ENCODE measurements at regions of chr13 and their contacts with region 1.

Region 1: GRCh38 chr13:75482070-75482819 is at the start of gene TBC1D4:
- DNase-seq: peak; percentile 89
- H3K4me3 ChIP-seq: peak within 1 kb of the TSS; percentile 64
- H3K27ac ChIP-seq: peak within 1 kb of the TSS; percentile 86
- H3K4me1 ChIP-seq: peaks cover 43% of the 10 kb centered on the region
- H3K27me3 ChIP-seq: no peaks in the 10 kb centered on the region
- CTCF ChIP-seq: peak; percentile 86
- total RNA-seq, gene TBC1D4: 15.7 and 19.5 TPM in 2 replicates

Region 2: GRCh38 chr13:75357576-75358289 is 124.5 kb before region 1 on chr13:
- CTCF ChIA-PET with region 1: no interaction called
- POLR2A ChIA-PET with region 1: no interaction called
- intact Hi-C with region 1: loop called (anchors 1 kb)
- DNase-seq: peak in 1 of 2 experiments; percentile 7
- H3K4me3 ChIP-seq: no peak overlapping the region
- H3K27ac ChIP-seq: no peak overlapping the region
- H3K4me1 ChIP-seq: no peaks in the 10 kb centered on the region
- H3K27me3 ChIP-seq: no peaks in the 10 kb centered on the region
- CTCF ChIP-seq: peak; percentile 64

Region 3: GRCh38 chr13:75372517-75372916 is 109.7 kb before region 1 on chr13:
- CTCF ChIA-PET with region 1: interaction called, 3 read pairs
- POLR2A ChIA-PET with region 1: no interaction called
- intact Hi-C with region 1: loop called (anchors 2 kb)
- DNase-seq: peak; percentile 16 to 44
- H3K4me3 ChIP-seq: no peak overlapping the region
- H3K27ac ChIP-seq: no peak overlapping the region
- H3K4me1 ChIP-seq: no peaks in the 10 kb centered on the region
- H3K27me3 ChIP-seq: no peaks in the 10 kb centered on the region
- CTCF ChIP-seq: peak; percentile 87

Region 4: DNA sequence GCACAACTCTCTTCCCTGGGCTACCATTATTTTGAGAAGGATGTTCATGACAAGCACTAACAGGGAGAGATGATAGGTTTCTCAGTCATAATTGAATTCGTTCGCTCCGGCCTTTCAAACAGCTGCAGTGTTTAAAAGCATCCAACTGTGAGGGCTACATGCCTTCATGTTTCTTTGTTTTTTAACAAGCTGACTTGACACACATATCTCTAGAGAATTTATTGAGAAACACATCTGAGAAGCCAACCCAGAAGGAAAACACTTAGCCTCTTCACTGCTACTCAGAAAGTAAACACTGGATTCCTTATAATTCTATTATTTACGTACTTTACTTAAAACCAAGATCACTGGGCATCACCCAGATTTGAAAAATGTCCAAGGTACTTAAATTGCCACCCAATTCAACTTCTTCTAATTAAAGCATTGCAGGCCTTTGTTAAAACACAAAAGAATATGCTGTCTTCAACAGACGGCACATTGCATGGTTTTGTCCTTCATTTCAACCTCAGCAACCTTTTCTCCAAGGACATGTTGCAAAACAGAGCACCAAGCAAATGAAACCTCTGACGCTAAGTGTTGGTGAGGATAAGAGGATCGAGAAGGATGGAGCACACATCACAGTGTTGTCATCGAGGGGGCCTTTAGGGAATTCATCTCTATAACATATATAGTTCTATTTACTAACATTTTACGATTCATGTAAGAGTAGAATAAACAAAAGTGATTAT is 76.1 kb before region 1 on chr13:
- CTCF ChIA-PET with region 1: no interaction called
- POLR2A ChIA-PET with region 1: no interaction called
- intact Hi-C with region 1: no loop called
- DNase-seq: no peak
- H3K4me3 ChIP-seq: no peak overlapping the region
- H3K27ac ChIP-seq: no peak overlapping the region
- H3K4me1 ChIP-seq: no peaks in the 10 kb centered on the region
- H3K27me3 ChIP-seq: no peaks in the 10 kb centered on the region
- CTCF ChIP-seq: no peak

Region 5: DNA sequence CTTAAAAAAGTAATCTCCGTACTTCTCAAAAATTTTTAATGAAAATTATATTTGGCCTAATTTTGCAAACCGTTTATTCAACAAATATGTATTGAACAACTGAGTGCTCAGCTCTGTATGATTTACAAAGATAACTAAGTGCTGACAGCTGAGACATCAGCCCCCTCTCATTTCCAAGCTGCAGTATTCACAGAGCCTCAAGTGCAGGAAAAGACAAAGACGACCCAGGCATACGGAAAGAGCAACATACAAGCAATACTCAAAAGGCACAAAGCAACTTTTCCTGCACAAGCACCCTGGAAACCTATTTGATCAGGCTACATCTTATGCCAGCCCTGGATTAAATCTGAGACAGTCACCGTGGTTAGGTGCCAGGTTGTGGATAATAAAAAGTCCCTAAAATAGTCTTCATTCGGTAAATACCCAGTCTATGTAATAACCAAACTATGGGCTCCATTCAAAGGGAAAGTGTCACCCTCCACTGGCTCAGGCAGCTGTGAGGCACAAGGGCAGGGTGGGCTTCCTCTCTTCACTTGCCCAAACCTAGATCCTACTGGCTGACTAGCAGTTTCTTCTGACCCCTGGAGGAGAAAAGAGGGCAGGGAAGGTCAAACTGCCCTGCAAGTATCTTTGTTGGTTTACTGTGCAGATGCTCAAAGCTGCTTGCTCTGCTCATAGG is 65.8 kb before region 1 on chr13:
- CTCF ChIA-PET with region 1: no interaction called
- POLR2A ChIA-PET with region 1: no interaction called
- intact Hi-C with region 1: loop called (anchors 2 kb)
- DNase-seq: no peak
- H3K4me3 ChIP-seq: 0 out of 2 replicates have a peak overlapping the region, but pooled peaks have one; percentile 10
- H3K27ac ChIP-seq: peak overlapping the region; percentile 65; the same call in 1 of the 2 replicates
- H3K4me1 ChIP-seq: peaks cover 50% of the 10 kb centered on the region
- H3K27me3 ChIP-seq: no peaks in the 10 kb centered on the region
- CTCF ChIP-seq: no peak

Region 6: GRCh38 chr13:75537401-75538365 is 55.4 kb after region 1 on chr13 and contains the start of gene COMMD6:
- CTCF ChIA-PET with region 1: no interaction called
- POLR2A ChIA-PET with region 1: no interaction called
- intact Hi-C with region 1: loop called (anchors 2 kb)
- DNase-seq: peak; percentile 70 to 75
- H3K4me3 ChIP-seq: peak within 1 kb of the TSS; percentile 87
- H3K27ac ChIP-seq: peak within 1 kb of the TSS; percentile 7; the same call in 1 of the 2 replicates
- H3K4me1 ChIP-seq: peaks cover 14% of the 10 kb centered on the region
- H3K27me3 ChIP-seq: no peaks in the 10 kb centered on the region
- CTCF ChIP-seq: peak; percentile 76
- total RNA-seq, gene COMMD6: 117 and 118 TPM in 2 replicates

Region 7: DNA sequence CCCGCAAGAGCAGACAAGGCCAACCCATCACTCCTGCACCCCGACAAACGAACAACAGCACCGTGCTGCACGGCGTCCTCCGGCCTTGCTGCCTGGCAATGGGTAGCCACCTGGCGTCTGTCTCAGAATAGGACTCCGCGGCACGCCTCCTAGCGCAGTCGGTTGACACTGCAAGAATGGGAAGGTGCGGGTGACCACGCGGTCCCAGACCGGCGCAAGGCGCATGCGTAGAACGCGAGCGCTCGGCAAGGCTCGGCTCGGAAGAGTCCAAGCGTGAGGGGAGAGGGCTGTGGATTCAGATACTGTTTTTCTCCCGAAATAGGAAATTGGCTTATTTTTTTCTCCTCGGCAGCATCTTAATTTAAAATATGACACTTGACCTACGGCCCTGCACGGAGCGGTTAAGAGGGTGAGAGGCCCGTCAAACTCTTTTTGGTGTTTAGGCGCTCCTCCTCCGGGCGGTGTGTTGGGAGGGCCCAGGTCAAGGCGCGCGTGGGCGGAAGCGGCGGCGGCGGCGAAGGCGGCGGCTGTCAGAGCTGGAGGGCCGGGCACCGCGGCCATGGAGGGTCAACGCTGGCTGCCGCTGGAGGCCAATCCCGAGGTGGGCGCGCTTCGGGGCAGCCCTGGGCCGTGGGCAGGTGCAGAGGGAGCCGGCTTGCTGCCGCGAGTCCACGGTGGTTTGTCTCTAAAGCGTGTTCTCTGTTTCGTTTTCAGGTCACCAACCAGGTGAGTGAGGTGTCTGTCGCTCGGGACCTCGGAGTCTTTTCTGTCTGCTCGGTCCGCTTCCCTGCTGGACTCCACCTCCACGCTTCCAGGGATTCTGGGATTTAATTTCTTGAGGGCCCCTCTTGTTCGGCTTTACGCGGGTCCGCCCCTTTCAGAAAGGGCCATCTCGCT is 67.3 kb after region 1 on chr13 and contains the start of gene UCHL3:
- CTCF ChIA-PET with region 1: interaction called, 13 read pairs
- POLR2A ChIA-PET with region 1: no interaction called
- intact Hi-C with region 1: loop called (anchors 1 kb)
- DNase-seq: peak; percentile 88 to 96
- H3K4me3 ChIP-seq: peak within 1 kb of the TSS; percentile 87
- H3K27ac ChIP-seq: peak within 1 kb of the TSS; percentile 66
- H3K4me1 ChIP-seq: peaks cover 44% of the 10 kb centered on the region
- H3K27me3 ChIP-seq: no peaks in the 10 kb centered on the region
- CTCF ChIP-seq: peak; percentile 83
- total RNA-seq, gene UCHL3: 39.7 and 54.9 TPM in 2 replicates

Region 8: GRCh38 chr13:75635828-75636435 is 153.7 kb after region 1 on chr13 and contains the start of gene LMO7:
- CTCF ChIA-PET with region 1: no interaction called
- POLR2A ChIA-PET with region 1: no interaction called
- intact Hi-C with region 1: loop called (anchors 5 kb)
- DNase-seq: peak; percentile 37 to 67
- H3K4me3 ChIP-seq: peak within 1 kb of the TSS; percentile 83
- H3K27ac ChIP-seq: no peak within 1 kb of the TSS
- H3K4me1 ChIP-seq: peaks cover 7% of the 10 kb centered on the region; the same call in 1 of the 2 replicates
- H3K27me3 ChIP-seq: no peaks in the 10 kb centered on the region
- CTCF ChIP-seq: no peak
- total RNA-seq, gene LMO7: 92.8 and 93.0 TPM in 2 replicates

Region 9: DNA sequence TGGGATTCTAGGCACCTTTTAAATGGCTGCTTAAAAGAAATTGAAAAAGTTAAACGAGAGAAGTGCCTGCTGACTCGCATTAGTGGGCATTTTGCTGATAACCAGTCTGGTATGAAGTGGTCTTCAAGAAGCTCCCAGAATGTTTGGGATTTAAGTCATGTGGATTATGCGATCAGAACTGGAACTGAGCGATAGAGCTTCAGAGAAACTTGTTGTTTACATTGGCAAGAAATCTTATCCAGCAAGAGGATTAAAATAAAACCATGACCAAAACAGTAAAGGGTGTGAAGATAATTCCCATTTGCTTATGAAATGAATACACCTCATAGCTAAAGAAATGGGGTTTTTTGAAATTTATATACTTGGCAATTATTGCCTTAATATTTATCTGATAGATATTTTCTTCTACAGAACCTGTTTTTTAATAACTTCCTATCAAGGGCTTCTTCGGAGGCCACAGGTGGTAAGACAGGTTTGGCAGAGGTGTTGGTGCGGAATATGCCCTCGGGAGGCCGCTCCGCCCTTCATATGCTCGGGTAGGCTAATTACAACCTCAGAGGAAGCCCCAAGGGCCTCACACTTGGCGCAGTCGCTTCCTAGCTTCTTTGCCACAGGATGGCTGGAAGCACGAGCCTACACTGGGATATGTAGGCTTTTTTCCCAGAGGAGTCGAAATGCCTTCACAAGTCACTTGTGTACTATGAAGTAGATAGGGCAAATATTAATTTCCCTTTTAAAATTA is 222.5 kb after region 1 on chr13:
- CTCF ChIA-PET with region 1: no interaction called
- POLR2A ChIA-PET with region 1: no interaction called
- intact Hi-C with region 1: no loop called
- DNase-seq: peak; percentile 88 to 95
- H3K4me3 ChIP-seq: peak overlapping the region; percentile 49
- H3K27ac ChIP-seq: peak overlapping the region; percentile 100
- H3K4me1 ChIP-seq: peaks cover 57% of the 10 kb centered on the region
- H3K27me3 ChIP-seq: no peaks in the 10 kb centered on the region
- CTCF ChIP-seq: no peak; the same call in 1 of the 2 replicates

Measured in PC-9 (cell line).